ENCODE measurements at regions of chr12 and their contacts with region 1.

Region 1: DNA sequence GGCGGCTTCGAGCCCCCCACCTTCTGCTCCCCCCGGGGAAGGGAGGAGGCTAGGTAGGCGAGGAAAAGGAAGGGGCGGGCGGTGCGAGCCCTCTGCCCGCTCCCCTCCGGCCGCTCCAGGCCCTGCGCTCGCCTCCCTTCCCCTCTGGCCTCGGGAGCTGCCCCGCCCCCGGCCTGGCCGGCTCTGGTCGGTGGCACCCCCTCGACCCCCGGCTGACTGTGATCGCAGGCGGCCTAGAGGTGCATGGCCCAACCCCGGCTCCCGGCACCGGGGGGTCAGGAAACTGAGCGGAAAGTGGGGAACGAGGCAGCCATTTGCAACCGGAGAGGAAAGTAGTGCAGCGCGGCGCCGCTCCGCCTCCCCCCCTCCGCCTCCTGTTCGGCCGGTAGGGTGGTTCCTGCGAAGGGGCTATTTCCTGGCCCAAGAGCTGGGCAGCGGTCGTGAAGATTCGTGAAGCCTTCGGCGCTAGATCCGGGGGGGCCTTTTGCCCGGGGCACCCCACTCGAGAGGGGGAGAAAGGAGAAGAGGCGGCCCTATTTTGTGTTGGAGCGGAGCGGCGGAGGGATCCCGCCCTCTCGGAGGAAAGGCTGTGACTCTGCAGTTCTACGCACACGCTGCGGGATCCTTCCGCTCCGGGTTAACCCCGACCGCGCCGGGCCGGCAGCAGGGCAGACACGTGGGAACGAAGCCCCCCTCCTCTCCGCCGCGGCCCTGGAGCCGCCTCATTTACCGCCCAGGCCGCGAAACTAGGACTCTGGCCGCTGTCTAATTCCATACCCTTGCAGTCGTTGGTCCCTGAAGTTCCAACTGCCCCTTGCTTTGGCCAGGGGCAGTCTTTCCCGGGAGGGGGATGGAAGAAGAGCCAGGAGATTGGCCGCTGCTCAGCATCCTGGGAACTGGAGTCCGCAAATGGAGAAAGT is at the start of gene KMT2D:
- DNase-seq: peak; percentile 93
- H3K4me3 ChIP-seq: peak within 1 kb of the TSS; percentile 87 to 93 (median 89)
- H3K27ac ChIP-seq: peak within 1 kb of the TSS; percentile 82
- H3K4me1 ChIP-seq: peaks cover 24% of the 10 kb centered on the region
- H3K27me3 ChIP-seq: no peaks in the 10 kb centered on the region
- CTCF ChIP-seq: peak in 1 of 2 donors; percentile 30
- total RNA-seq, gene KMT2D: 30.7 to 78.0 TPM

Region 2: GRCh38 chr12:48924617-48925303 is 135.7 kb before region 1 on chr12:
- CTCF ChIA-PET with region 1: no interaction called
- dilution Hi-C with region 1: no loop called
- in situ Hi-C with region 1: no loop called
- intact Hi-C with region 1: no loop called
- DNase-seq: peak; percentile 11
- H3K4me3 ChIP-seq: peak overlapping the region; percentile 64 to 87 (median 73)
- H3K27ac ChIP-seq: peak overlapping the region; percentile 1
- H3K4me1 ChIP-seq: peaks cover 7% of the 10 kb centered on the region
- H3K27me3 ChIP-seq: no peaks in the 10 kb centered on the region
- CTCF ChIP-seq: peak; percentile 60

Region 3: DNA sequence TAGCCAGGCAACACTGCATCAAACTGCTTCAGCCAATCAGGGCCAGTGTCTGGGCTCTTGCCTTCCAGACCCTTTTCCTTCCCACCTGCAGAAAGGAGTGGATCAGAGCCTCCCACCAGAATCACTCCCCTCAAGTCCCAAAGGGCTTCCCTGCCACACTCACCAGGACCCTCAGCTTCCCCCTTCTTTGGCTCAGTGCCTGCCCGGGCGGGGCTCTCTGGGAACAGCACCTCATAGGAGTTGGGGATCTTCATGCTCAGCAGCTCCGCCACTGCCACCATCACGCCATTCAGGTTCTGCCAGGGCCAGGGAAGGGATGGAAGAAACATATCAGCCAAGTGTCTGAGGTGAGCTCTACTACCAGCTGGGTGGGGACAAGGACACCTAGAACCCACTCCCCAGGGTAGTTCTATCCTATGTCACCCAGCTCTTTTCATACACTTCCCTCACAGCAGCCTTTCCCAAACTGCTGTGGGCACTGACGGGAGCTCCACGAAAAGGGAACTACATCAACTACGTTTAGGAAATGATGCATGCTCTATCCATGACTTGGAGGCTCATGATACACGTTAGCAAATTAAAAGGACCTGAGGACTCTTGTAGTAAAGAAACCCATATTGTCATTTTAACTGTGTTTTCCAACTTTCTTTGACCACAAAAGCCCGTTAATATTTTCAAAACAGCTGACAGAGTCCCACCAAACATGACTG is 32.5 kb before region 1 on chr12:
- CTCF ChIA-PET with region 1: no interaction called
- dilution Hi-C with region 1: no loop called
- in situ Hi-C with region 1: no loop called
- intact Hi-C with region 1: loop called (anchors 2 kb)
- DNase-seq: no peak
- H3K4me3 ChIP-seq: no peak overlapping the region
- H3K27ac ChIP-seq: no peak overlapping the region
- H3K4me1 ChIP-seq: no peaks in the 10 kb centered on the region
- H3K27me3 ChIP-seq: no peaks in the 10 kb centered on the region
- CTCF ChIP-seq: no peak

Region 4: DNA sequence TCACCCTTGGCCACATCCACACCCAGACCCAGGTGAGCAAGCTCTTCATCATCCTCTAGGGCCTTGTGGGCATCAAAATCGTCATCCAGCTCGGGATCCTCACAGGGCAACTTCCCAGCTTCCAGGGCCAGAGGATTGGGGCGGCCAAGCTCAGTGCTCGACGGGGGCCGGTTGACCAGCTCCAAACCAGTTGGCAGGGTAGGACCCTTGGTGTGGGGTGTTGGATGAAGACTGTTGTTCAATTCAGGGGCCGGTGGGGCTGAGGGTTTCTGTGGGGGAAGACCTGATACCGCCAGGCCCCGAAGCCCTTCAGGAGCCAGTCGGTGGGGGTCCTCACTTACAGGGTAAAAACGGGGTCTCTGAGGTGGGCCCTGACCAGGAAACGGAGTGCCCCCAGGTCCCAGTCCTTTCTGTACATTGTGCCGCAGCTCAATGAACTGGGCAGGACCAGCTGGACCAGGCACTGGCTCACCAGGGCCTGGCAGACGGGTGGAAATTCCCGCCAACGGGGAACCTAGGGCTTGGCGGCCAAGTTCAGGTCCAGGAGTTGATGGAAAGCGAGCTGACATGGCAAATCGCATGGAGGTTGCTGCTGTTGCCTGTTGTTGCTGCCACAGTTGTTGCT is 22.1 kb before region 1 on chr12:
- CTCF ChIA-PET with region 1: no interaction called
- dilution Hi-C with region 1: no loop called
- in situ Hi-C with region 1: no loop called
- intact Hi-C with region 1: no loop called
- DNase-seq: no peak
- H3K4me3 ChIP-seq: no peak overlapping the region
- H3K27ac ChIP-seq: no peak overlapping the region
- H3K4me1 ChIP-seq: no peaks in the 10 kb centered on the region
- H3K27me3 ChIP-seq: no peaks in the 10 kb centered on the region
- CTCF ChIP-seq: no peak

Region 5: GRCh38 chr12:49098035-49098451 is 37.5 kb after region 1 on chr12:
- CTCF ChIA-PET with region 1: interaction called, 3 read pairs
- dilution Hi-C with region 1: no loop called
- in situ Hi-C with region 1: no loop called
- intact Hi-C with region 1: loop called (anchors 1 kb)
- DNase-seq: no peak
- H3K4me3 ChIP-seq: no peak overlapping the region
- H3K27ac ChIP-seq: no peak overlapping the region
- H3K4me1 ChIP-seq: peaks cover 6% of the 10 kb centered on the region
- H3K27me3 ChIP-seq: peaks cover 19% of the 10 kb centered on the region
- CTCF ChIP-seq: peak; percentile 81